Sigmoid colon (tissue), 7 donors: ENCODE measurements at regions of chr12 and their contacts with region 1.

Region 1: DNA sequence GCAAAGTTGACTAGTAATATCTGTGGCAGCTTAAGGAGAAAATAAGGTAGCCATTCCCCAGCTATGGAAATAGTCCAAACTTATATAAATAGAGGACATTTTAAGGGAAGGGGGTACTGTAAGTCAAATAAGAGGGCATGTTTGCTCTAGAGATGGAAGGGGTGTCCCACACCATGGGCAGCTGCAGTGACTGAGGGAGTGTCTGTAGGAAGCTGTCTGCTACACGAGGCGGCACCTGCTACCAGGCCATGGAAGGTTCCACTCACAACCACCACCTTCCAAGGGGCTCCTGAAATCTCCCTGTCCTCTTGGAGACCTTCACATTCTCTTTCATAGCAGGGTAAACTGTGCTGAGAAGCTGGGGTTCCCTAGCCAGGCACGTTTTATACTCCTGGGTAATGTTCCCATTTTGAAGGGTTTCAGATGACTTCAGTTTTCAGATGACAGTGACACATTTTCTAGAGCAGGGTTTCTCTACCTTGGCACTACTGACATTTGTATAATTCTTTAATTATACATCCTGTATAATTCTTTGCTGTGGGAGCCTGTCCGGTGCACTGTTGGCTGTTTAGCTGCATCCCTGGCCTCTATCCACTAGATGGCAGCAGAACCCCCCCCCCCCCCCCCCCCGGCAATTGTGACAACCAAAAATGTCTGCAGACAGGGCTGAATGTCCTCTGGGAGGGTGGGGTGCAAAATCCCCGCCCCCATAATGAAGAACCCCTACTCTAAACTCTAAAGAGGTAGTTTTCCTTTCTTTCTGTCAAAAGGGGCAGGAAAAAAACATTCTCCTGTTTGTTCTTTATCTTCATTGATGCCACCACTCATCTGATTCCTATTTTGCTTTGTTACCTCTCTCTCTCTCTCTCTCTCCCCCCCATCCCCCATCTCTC is 11.6 kb upstream of the SMCO2 start:
- DNase-seq: no peak
- H3K4me3 ChIP-seq: no peak overlapping the region
- H3K27ac ChIP-seq: no peak overlapping the region
- H3K4me1 ChIP-seq: peaks cover 0 to 17% (median 14%) of the 10 kb centered on the region in 4 donors
- H3K27me3 ChIP-seq: no peaks in the 10 kb centered on the region
- CTCF ChIP-seq: peak in 2 of 4 experiments; percentile 12 to 69
- EP300 ChIP-seq: no peak
- POLR2A ChIP-seq: no peak

Region 2: DNA sequence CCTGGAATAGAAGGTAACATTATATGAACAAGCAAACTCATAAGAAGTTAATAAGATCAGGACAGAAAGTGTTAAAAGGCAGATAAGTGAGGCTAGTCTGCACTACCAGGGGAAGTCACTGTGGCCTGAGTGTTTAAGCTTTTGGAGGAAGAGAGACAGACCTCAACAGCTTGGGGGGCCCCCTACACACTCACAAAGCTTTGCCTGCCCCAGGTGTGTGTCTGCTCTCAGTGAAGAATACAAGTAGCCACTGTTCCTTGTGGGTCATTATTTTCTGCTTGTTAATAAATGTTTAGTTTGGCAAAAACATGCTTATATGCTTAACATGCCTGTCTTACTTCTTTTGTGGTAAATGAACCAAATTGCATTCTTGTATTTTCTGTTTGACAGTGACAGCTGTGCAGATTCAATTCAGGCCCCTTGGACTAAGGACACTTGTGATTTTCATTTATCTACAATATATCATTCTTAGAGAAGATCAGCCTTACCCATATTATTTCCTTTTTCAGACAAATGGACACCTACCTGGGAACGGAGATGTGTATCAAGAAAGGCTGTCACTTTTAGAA is 301.8 kb before region 1 on chr12:
- intact Hi-C with region 1: no loop called
- DNase-seq: no peak
- H3K4me3 ChIP-seq: no peak overlapping the region
- H3K27ac ChIP-seq: no peak overlapping the region
- H3K4me1 ChIP-seq: no peaks in the 10 kb centered on the region
- H3K27me3 ChIP-seq: no peaks in the 10 kb centered on the region
- CTCF ChIP-seq: no peak
- EP300 ChIP-seq: no peak
- POLR2A ChIP-seq: no peak

Region 3: GRCh38 chr12:27284751-27285150 is 150.2 kb before region 1 on chr12:
- intact Hi-C with region 1: no loop called
- DNase-seq: no peak
- H3K4me3 ChIP-seq: no peak overlapping the region
- H3K27ac ChIP-seq: peak overlapping the region; percentile 27 to 60 (median 55)
- H3K4me1 ChIP-seq: peaks cover 0 to 78% (median 60%) of the 10 kb centered on the region in 4 donors
- H3K27me3 ChIP-seq: no peaks in the 10 kb centered on the region
- CTCF ChIP-seq: no peak
- EP300 ChIP-seq: no peak
- POLR2A ChIP-seq: no peak

Region 4: GRCh38 chr12:27635349-27635972 is 200.5 kb after region 1 on chr12:
- intact Hi-C with region 1: loop called (anchors 1 kb)
- DNase-seq: no peak
- H3K4me3 ChIP-seq: no peak overlapping the region
- H3K27ac ChIP-seq: no peak overlapping the region
- H3K4me1 ChIP-seq: peaks cover 0 to 20% (median 7%) of the 10 kb centered on the region in 4 donors
- H3K27me3 ChIP-seq: no peaks in the 10 kb centered on the region
- CTCF ChIP-seq: peak; percentile 54 to 64 (median 58)
- EP300 ChIP-seq: no peak
- POLR2A ChIP-seq: no peak

Region 5: DNA sequence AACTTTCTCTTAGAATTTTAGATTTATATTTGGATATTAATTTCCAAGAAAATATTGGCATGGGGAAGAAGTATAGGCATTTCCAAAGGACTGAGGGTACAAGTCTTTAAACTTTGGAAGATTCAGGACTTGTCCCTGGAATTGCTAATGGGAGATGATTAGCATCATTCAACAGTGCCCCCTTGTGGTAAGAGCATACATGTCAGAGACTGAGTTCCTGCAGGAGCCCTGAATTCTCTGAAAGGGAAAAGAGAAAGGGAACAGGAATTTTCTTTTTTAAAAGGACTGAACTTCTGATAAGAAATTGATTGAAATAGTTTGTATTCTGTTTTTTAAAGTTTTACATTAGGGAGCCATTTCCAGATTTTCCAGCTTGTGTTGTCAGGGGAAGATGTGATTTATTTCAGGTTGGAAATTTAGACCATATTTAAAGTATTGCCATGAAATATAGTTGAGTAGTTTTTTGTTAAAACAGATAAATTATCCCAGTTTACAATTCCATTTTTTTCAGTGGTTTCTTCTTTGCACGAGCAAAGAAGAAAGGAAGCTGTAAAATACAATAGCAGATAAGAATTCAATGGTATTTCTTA is 217.3 kb after region 1 on chr12:
- intact Hi-C with region 1: loop called (anchors 1 kb)
- DNase-seq: no peak
- H3K4me3 ChIP-seq: no peak overlapping the region
- H3K27ac ChIP-seq: no peak overlapping the region
- H3K4me1 ChIP-seq: no peaks in the 10 kb centered on the region
- H3K27me3 ChIP-seq: no peaks in the 10 kb centered on the region
- CTCF ChIP-seq: peak; percentile 27 to 84 (median 81)
- EP300 ChIP-seq: no peak
- POLR2A ChIP-seq: no peak